ENCODE measurements at regions of chr13 and their contacts with region 1.

Region 1: GRCh38 chr13:52599848-52600603 is 42.2 kb upstream of the HNRNPA1L2 start:
- DNase-seq: peak in 1 of 2 donors; percentile 86
- H3K4me3 ChIP-seq: peak overlapping the region; percentile 48
- CTCF ChIP-seq: no peak
- POLR2A ChIP-seq: no peak

Region 2: DNA sequence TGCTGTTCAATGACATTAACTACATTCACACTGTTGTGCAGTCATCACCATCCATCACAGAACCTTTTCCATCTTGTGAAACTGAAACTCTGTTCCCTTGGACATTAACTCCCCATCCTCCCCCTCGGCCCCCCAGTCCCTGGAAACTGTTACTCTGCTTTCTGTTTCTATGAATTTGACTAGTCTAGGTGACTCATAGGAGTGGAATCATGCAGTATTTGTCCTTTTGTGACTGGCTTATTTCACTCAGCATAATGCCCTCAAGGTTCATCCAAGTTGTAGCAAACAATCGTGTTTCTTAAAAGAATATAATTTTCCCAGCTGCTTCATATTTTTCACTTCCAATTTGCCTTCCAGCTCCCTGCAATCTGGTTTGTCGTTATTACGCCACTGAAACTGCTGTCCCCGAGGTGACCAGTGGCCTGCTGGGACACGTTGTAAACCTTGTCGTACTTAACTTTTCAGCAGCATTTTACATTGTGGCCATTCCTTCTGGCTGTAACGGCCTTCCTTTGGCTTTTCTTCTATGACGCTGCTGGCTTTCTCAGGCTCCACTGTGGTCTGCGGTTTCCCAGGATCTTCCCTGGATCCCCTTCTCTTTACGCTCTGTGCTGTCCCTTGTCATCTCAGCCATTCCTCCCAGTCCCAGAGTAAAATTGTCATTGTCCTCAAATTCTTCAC is 870.0 kb before region 1 on chr13:
- intact Hi-C with region 1: no loop called
- DNase-seq: peak; percentile 66 to 90
- H3K4me3 ChIP-seq: no peak overlapping the region
- CTCF ChIP-seq: no peak
- POLR2A ChIP-seq: no peak

Region 3: GRCh38 chr13:52903320-52903719 is 303.3 kb after region 1 on chr13:
- intact Hi-C with region 1: no loop called
- DNase-seq: no peak
- H3K4me3 ChIP-seq: no peak overlapping the region
- CTCF ChIP-seq: no peak
- POLR2A ChIP-seq: no peak

Region 4: GRCh38 chr13:52968074-52968700 is 368.2 kb after region 1 on chr13:
- intact Hi-C with region 1: loop called (anchors 10 kb)
- DNase-seq: peak; percentile 48 to 90
- H3K4me3 ChIP-seq: no peak overlapping the region
- CTCF ChIP-seq: peak in 1 of 3 donors; percentile 80
- POLR2A ChIP-seq: no peak

Region 5: DNA sequence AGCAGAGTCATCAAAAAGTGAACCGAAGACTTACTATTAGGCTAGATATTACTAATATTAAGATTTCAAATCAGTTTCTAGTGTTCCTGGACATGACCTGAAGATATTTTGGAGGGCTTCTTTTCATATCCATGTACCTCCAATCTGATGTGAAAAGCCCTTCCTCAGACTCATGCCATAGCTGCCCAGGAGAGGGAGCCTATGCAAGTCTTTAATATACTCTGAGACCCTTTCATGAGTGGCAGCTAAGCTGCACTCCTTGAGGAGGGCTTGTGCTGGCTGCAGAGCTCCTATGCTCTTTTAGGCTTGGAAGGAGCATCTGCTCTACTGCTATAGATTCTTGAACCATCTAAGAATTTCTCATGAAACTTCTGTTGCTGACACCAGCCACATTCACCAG is 1143.9 kb after region 1 on chr13:
- intact Hi-C with region 1: no loop called
- DNase-seq: no peak
- H3K4me3 ChIP-seq: no peak overlapping the region
- CTCF ChIP-seq: no peak
- POLR2A ChIP-seq: no peak

Region 6: DNA sequence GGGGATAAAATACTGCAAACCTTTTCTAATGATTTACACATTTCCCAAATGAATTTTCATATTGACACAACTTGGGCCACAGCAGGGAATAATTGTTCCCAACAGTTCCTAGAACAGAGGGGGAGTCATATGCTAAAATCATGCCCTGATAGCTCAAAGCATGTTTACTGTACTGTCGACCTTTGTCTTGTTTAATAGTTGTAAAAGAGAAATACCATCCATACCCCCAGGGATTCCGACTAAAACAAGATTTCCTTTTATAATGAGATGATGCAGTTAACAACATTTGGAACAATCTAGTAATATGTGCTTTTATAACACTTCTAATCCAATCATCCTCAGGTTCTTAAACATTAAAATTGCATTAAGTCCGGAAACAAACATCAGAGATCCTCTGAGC is 1188.3 kb after region 1 on chr13:
- intact Hi-C with region 1: no loop called
- DNase-seq: no peak
- H3K4me3 ChIP-seq: no peak overlapping the region
- CTCF ChIP-seq: no peak
- POLR2A ChIP-seq: no peak

Measured in lower leg skin (tissue), 4 donors.